Activated CD4-positive, alpha-beta memory T cell treated with anti-CD3 and anti-CD28 coated beads, Interleukin-2, amount 10 ng/mL, durations not matched to agents 7 days and 5 days (primary cell): ENCODE measurements at regions of chr5 and their contacts with region 1.

Region 1: GRCh38 chr5:119290161-119290569 is 65.7 kb upstream of the TNFAIP8 start:
- DNase-seq: no peak
- H3K4me3 Mint-ChIP-seq: peak overlapping the region; percentile 56
- H3K27ac Mint-ChIP-seq: peak overlapping the region; percentile 80
- H3K4me1 Mint-ChIP-seq: peaks cover 85% of the 10 kb centered on the region
- H3K27me3 Mint-ChIP-seq: no peaks in the 10 kb centered on the region

Region 2: GRCh38 chr5:118946138-118946800 is 343.9 kb before region 1 on chr5:
- CTCF ChIA-PET with region 1: no interaction called
- POLR2A ChIA-PET with region 1: no interaction called
- DNase-seq: no peak
- H3K4me3 Mint-ChIP-seq: no peak overlapping the region
- H3K27ac Mint-ChIP-seq: no peak overlapping the region
- H3K4me1 Mint-ChIP-seq: no peaks in the 10 kb centered on the region
- H3K27me3 Mint-ChIP-seq: no peaks in the 10 kb centered on the region

Region 3: DNA sequence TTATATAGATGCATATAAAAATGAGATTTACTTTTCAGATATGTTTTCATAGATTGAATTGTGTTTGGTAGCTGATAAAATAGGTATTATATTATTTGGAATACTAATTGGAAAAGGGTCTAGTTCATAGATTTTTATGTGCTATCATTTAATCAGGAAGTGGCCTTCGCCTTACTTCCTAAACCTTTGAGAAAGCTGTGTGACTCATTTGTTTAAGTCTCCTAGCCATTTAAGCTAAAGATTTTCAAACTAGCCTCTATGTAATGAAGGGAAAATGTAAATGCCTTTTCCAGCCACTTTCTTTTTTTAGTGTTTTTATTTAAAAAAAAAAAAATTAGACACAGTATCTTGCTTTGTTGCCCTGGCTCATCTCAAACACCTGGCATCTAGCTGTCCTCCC is 121.8 kb before region 1 on chr5:
- CTCF ChIA-PET with region 1: no interaction called
- POLR2A ChIA-PET with region 1: no interaction called
- DNase-seq: no peak
- H3K4me3 Mint-ChIP-seq: no peak overlapping the region
- H3K27ac Mint-ChIP-seq: no peak overlapping the region
- H3K4me1 Mint-ChIP-seq: peaks cover 5% of the 10 kb centered on the region
- H3K27me3 Mint-ChIP-seq: no peaks in the 10 kb centered on the region

Region 4: DNA sequence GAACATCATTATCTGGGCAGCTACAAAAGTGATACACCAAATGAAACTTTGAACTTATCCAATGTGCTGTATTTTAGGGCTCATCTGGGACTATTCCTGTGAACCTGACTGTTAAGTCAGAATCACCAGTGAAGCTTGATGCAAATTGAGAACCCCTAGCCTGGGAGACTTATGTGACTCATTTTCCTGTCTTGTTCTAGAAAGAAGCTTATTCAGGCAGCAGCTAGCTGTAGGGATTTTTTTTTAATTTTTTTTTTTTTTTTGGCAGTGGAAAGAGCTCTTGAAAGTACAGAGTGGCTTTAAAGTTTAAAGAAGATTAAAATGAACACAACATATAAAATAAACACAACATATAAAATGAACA is 15.4 kb before region 1 on chr5:
- CTCF ChIA-PET with region 1: interaction called, 4 read pairs
- POLR2A ChIA-PET with region 1: interaction called, 128 read pairs
- DNase-seq: no peak
- H3K4me3 Mint-ChIP-seq: peak overlapping the region; percentile 71
- H3K27ac Mint-ChIP-seq: peak overlapping the region; percentile 89
- H3K4me1 Mint-ChIP-seq: peaks cover 89% of the 10 kb centered on the region
- H3K27me3 Mint-ChIP-seq: no peaks in the 10 kb centered on the region

Region 5: GRCh38 chr5:119302916-119303897 is 13.0 kb after region 1 on chr5:
- CTCF ChIA-PET with region 1: interaction called, 8 read pairs
- POLR2A ChIA-PET with region 1: interaction called, 98 read pairs
- DNase-seq: no peak
- H3K4me3 Mint-ChIP-seq: no peak overlapping the region
- H3K27ac Mint-ChIP-seq: peak overlapping the region; percentile 32
- H3K4me1 Mint-ChIP-seq: peaks cover 90% of the 10 kb centered on the region
- H3K27me3 Mint-ChIP-seq: no peaks in the 10 kb centered on the region

Region 6: DNA sequence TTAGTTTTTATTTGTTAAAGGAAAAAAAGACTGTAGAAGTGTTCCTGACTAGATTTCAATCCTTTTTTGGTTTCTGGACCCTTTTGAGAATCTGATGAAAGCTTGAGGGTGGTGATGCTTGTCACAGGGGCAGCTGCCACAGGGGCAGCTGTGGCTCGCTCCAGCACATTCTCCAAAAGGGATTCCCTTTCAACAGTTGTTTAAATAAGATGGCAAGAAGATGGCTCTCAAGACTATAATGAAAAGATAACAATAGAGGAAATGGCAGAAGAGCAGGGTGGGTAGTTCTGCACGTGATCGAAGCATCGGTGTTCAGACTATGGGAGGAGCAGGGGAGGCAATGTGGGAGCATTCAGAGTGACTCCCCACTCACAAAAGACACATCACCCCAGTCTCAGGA is 19.2 kb after region 1 on chr5:
- CTCF ChIA-PET with region 1: interaction called, 4 read pairs
- POLR2A ChIA-PET with region 1: interaction called, 98 read pairs
- DNase-seq: no peak
- H3K4me3 Mint-ChIP-seq: peak overlapping the region; percentile 64
- H3K27ac Mint-ChIP-seq: peak overlapping the region; percentile 95
- H3K4me1 Mint-ChIP-seq: peaks cover 94% of the 10 kb centered on the region
- H3K27me3 Mint-ChIP-seq: no peaks in the 10 kb centered on the region